ENCODE measurements at regions of chr10 and their contacts with region 1.

Region 1: GRCh38 chr10:52740913-52741675 is 31.5 kb downstream of the MBL2 start:
- DNase-seq: peak; percentile 32
- ATAC-seq: peak; percentile 84
- H3K4me3 ChIP-seq: no peak overlapping the region
- H3K27ac ChIP-seq: no peak overlapping the region
- H3K4me1 ChIP-seq: no peaks in the 10 kb centered on the region
- H3K27me3 ChIP-seq: no peaks in the 10 kb centered on the region
- CTCF ChIP-seq: peak; percentile 64 to 95 (median 92); a peak in 5 of 6 replicates
- POLR2A ChIP-seq: no peak
- RAD21 ChIP-seq: peak; percentile 69

Region 2: DNA sequence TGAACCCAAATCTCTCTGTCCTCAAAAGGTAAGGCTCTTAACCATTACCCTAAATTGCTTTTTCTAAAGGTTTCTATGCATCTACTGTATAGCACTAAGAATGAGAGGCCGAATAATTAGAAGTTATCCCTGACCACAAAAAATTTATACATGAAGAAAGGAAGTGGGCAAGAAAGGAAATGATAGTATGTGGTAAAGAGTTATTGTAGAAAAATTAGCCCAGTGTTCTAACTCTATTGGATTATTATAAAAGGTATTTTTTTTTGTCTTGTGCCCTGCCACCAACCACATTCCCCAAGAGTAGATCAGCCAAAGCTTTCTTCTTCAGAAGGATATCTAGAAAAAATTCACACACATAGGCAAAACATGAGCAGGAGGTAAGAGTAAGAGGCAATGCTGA is 381.7 kb before region 1 on chr10:
- CTCF ChIA-PET with region 1: no interaction called
- POLR2A ChIA-PET with region 1: no interaction called
- RAD21 ChIA-PET with region 1: no interaction called
- intact Hi-C with region 1: no loop called
- DNase-seq: no peak
- ATAC-seq: no peak
- H3K4me3 ChIP-seq: no peak overlapping the region
- H3K27ac ChIP-seq: no peak overlapping the region
- H3K4me1 ChIP-seq: no peaks in the 10 kb centered on the region
- H3K27me3 ChIP-seq: no peaks in the 10 kb centered on the region
- CTCF ChIP-seq: no peak
- POLR2A ChIP-seq: no peak
- RAD21 ChIP-seq: no peak

Region 3: DNA sequence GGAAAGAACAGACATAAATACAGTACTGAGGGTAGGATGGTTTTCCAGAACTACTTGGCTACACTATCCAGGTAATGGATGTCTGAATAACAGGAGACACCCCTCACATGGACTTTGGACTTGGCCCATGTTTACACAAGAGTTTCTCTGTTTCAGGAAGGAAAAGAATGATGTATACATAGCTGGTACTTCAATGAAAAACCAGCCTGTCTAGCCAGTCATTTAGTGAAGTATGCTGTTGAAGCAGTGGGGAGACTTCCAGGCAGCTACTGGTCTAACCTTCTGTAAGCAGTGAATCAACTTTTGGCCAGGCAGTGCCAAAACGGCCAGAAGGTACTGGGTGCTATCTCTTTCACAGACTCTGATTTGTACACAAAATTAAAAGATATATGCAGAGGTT is 103.5 kb before region 1 on chr10:
- CTCF ChIA-PET with region 1: no interaction called
- POLR2A ChIA-PET with region 1: no interaction called
- RAD21 ChIA-PET with region 1: no interaction called
- intact Hi-C with region 1: no loop called
- DNase-seq: no peak
- ATAC-seq: no peak
- H3K4me3 ChIP-seq: no peak overlapping the region
- H3K27ac ChIP-seq: no peak overlapping the region
- H3K4me1 ChIP-seq: peaks cover 0 to 6% of the 10 kb centered on the region in 2 experiments; a peak in 1 of 4 replicates
- H3K27me3 ChIP-seq: no peaks in the 10 kb centered on the region
- CTCF ChIP-seq: no peak
- POLR2A ChIP-seq: no peak
- RAD21 ChIP-seq: no peak

Region 4: GRCh38 chr10:52729271-52730104 is 11.6 kb before region 1 on chr10:
- CTCF ChIA-PET with region 1: no interaction called
- POLR2A ChIA-PET with region 1: no interaction called
- RAD21 ChIA-PET with region 1: no interaction called
- intact Hi-C with region 1: no loop called
- DNase-seq: peak; percentile 21
- ATAC-seq: peak; percentile 69
- H3K4me3 ChIP-seq: no peak overlapping the region; a peak in 1 of 4 replicates
- H3K27ac ChIP-seq: no peak overlapping the region
- H3K4me1 ChIP-seq: no peaks in the 10 kb centered on the region
- H3K27me3 ChIP-seq: no peaks in the 10 kb centered on the region
- CTCF ChIP-seq: peak; percentile 38 to 77 (median 63); a peak in 4 of 6 replicates
- POLR2A ChIP-seq: no peak
- RAD21 ChIP-seq: peak; percentile 78

Region 5: GRCh38 chr10:52779541-52780390 is 38.7 kb after region 1 on chr10:
- CTCF ChIA-PET with region 1: interaction called, 15 read pairs
- POLR2A ChIA-PET with region 1: no interaction called
- RAD21 ChIA-PET with region 1: no interaction called
- intact Hi-C with region 1: loop called (anchors 1 kb)
- DNase-seq: peak; percentile 45
- ATAC-seq: peak; percentile 95
- H3K4me3 ChIP-seq: no peak overlapping the region
- H3K27ac ChIP-seq: no peak overlapping the region
- H3K4me1 ChIP-seq: no peaks in the 10 kb centered on the region
- H3K27me3 ChIP-seq: no peaks in the 10 kb centered on the region
- CTCF ChIP-seq: peak; percentile 57 to 93 (median 90); a peak in 5 of 6 replicates
- POLR2A ChIP-seq: no peak
- RAD21 ChIP-seq: peak; percentile 83

Measured in HCT116 (cell line).